MCF 10A (cell line): ENCODE measurements at regions of chr1 and their contacts with region 1.

Region 1: GRCh38 chr1:28518000-28518744 is 12.3 kb downstream of the RCC1 start:
- DNase-seq: peak; percentile 89
- H3K4me3 Mint-ChIP-seq: peak overlapping the region; percentile 69
- H3K27ac Mint-ChIP-seq: peak overlapping the region; percentile 75
- H3K4me1 Mint-ChIP-seq: peaks cover 29% of the 10 kb centered on the region
- H3K27me3 Mint-ChIP-seq: no peaks in the 10 kb centered on the region
- CTCF ChIP-seq: peak; percentile 93

Region 2: GRCh38 chr1:28156821-28157220 is 361.4 kb before region 1 on chr1:
- CTCF ChIA-PET with region 1: no interaction called
- POLR2A ChIA-PET with region 1: no interaction called
- intact Hi-C with region 1: no loop called
- DNase-seq: peak; percentile 67
- H3K4me3 Mint-ChIP-seq: no peak overlapping the region
- H3K27ac Mint-ChIP-seq: no peak overlapping the region
- H3K4me1 Mint-ChIP-seq: peaks cover 16% of the 10 kb centered on the region
- H3K27me3 Mint-ChIP-seq: no peaks in the 10 kb centered on the region
- CTCF ChIP-seq: no peak

Region 3: DNA sequence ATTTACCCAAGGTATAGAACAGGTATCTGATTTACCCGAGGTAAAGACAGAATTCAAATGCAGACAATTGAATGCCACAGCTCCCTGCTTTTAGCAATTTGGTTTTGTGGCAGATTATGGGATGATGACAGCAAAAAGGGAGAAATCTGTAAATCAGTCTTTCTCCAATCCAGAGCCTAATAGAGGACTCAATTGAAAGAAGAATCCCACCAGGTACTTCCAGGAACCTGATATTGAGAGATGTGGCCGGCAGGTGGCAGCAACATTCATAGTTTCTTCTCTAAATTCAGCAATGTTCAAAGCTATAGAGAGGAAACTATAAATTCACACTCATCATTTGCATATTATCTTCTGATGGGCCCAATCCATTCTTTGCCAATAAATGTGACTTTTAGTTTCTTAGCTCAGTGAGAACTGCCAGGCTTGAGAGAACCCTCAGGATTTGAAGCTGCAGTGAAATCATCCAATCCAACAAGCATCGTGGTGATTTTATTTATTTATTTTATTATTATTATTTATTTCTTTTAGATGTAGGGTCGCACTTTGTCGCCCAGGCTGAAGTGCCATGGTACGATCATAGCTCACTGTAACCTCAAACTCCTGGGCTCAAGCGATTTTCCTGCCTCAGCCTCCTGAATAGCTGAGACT is 158.5 kb before region 1 on chr1:
- CTCF ChIA-PET with region 1: interaction called, 3 read pairs
- POLR2A ChIA-PET with region 1: interaction called, 5 read pairs
- intact Hi-C with region 1: loop called (anchors 2 kb)
- DNase-seq: peak; percentile 64
- H3K4me3 Mint-ChIP-seq: no peak overlapping the region
- H3K27ac Mint-ChIP-seq: no peak overlapping the region
- H3K4me1 Mint-ChIP-seq: no peaks in the 10 kb centered on the region
- H3K27me3 Mint-ChIP-seq: no peaks in the 10 kb centered on the region
- CTCF ChIP-seq: peak; percentile 63

Region 4: GRCh38 chr1:28466226-28466778 is 51.9 kb before region 1 on chr1:
- CTCF ChIA-PET with region 1: no interaction called
- POLR2A ChIA-PET with region 1: no interaction called
- intact Hi-C with region 1: no loop called
- DNase-seq: no peak
- H3K4me3 Mint-ChIP-seq: no peak overlapping the region
- H3K27ac Mint-ChIP-seq: no peak overlapping the region
- H3K4me1 Mint-ChIP-seq: no peaks in the 10 kb centered on the region
- H3K27me3 Mint-ChIP-seq: no peaks in the 10 kb centered on the region
- CTCF ChIP-seq: no peak

Region 5: GRCh38 chr1:28552758-28553663 is 34.8 kb after region 1 on chr1 and contains the start of gene TRNAU1AP:
- CTCF ChIA-PET with region 1: interaction called, 4 read pairs
- POLR2A ChIA-PET with region 1: interaction called, 25 read pairs
- intact Hi-C with region 1: no loop called
- DNase-seq: peak; percentile 95
- H3K4me3 Mint-ChIP-seq: peak within 1 kb of the TSS; percentile 100
- H3K27ac Mint-ChIP-seq: peak within 1 kb of the TSS; percentile 97
- H3K4me1 Mint-ChIP-seq: no peaks in the 10 kb centered on the region
- H3K27me3 Mint-ChIP-seq: no peaks in the 10 kb centered on the region
- CTCF ChIP-seq: no peak
- total RNA-seq, gene TRNAU1AP: 28.2 and 33.4 TPM in 2 replicates

Region 6: GRCh38 chr1:28602536-28603439 is 84.6 kb after region 1 on chr1:
- CTCF ChIA-PET with region 1: interaction called, 37 read pairs
- POLR2A ChIA-PET with region 1: interaction called, 50 read pairs
- intact Hi-C with region 1: loop called (anchors 1 kb)
- DNase-seq: peak; percentile 87
- H3K4me3 Mint-ChIP-seq: no peak overlapping the region
- H3K27ac Mint-ChIP-seq: no peak overlapping the region
- H3K4me1 Mint-ChIP-seq: peaks cover 10% of the 10 kb centered on the region
- H3K27me3 Mint-ChIP-seq: no peaks in the 10 kb centered on the region
- CTCF ChIP-seq: peak; percentile 76

Region 7: DNA sequence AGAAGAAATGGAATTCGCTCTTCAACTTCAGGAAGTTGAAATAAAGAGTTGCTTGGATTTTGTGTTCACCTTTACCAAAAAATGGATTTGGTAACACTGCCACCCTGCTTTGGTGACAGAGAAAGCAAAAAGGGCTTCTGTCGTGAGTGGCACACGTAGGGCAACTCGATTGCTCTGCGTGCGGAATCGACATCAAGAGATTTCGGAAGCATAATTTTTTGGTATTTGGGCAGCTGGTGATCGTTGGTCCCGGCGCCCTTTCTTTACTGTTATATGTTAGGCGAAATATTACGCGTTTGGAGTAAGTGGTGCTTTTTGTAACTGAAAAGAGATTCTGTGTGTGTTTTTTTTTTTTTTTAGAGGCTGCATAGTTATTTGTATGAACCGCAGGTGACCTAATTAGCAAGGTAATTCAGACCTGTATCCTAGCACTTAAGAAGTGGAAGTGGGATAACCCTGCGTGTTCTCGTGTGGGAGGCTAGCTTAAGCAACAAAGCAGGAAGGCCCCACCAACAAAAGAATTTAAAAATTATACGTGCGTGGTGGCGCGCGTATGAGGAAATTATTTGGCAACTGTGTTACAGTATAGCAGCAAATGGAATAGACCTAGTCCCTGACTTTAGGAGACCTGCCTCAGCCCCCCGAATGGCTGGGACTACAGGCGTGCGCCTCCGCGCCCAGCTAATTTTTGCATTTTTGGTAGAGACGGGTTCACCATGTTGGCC is 130.5 kb after region 1 on chr1 and contains the start of gene RNU11:
- CTCF ChIA-PET with region 1: no interaction called
- POLR2A ChIA-PET with region 1: interaction called, 8 read pairs
- intact Hi-C with region 1: loop called (anchors 2 kb)
- DNase-seq: peak; percentile 97
- H3K4me3 Mint-ChIP-seq: peak within 1 kb of the TSS; percentile 77
- H3K27ac Mint-ChIP-seq: peak within 1 kb of the TSS; percentile 100
- H3K4me1 Mint-ChIP-seq: peaks cover 25% of the 10 kb centered on the region
- H3K27me3 Mint-ChIP-seq: no peaks in the 10 kb centered on the region
- CTCF ChIP-seq: no peak
- total RNA-seq, gene RNU11: not detected in 2 replicates

Region 8: DNA sequence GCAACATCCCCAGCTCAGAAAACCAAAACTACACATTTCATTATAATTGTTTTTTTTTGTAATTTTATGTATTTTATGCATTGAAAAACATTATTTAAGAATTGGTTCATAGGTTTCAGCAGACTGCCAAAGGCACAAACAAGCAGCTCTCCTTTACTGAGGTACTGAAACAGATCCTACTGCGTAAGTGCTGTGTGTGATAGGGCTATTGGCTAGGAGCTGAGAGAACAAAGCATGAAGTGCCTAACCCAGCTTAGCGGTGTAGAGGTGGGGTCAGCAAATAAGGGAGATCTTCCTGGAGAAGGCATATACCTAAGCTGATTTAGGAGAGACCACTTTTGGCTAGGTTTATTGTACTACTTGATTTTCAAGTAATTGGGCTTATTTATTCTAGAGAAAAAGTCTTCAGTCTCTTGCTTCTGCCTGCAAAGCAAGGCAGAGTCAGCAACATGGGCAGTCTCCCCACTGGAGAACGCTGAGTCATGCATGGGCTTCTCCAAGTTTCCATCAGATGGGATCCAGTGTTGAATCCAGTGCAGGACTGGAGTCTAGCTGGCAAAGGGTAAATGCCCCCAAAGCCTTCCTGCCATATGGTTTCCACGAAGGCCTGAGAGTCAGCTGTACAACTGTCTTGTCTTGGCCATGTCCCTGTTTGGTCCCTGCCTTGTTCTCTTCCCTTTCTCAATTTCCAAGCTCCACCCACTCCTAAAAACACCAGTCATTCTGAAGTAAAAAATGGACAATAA is 200.6 kb after region 1 on chr1:
- CTCF ChIA-PET with region 1: no interaction called
- POLR2A ChIA-PET with region 1: no interaction called
- intact Hi-C with region 1: no loop called
- DNase-seq: peak; percentile 17
- H3K4me3 Mint-ChIP-seq: no peak overlapping the region
- H3K27ac Mint-ChIP-seq: no peak overlapping the region
- H3K4me1 Mint-ChIP-seq: no peaks in the 10 kb centered on the region
- H3K27me3 Mint-ChIP-seq: no peaks in the 10 kb centered on the region
- CTCF ChIP-seq: no peak